PC-9 (cell line): ENCODE measurements at regions of chr17 and their contacts with region 1.

Region 1: DNA sequence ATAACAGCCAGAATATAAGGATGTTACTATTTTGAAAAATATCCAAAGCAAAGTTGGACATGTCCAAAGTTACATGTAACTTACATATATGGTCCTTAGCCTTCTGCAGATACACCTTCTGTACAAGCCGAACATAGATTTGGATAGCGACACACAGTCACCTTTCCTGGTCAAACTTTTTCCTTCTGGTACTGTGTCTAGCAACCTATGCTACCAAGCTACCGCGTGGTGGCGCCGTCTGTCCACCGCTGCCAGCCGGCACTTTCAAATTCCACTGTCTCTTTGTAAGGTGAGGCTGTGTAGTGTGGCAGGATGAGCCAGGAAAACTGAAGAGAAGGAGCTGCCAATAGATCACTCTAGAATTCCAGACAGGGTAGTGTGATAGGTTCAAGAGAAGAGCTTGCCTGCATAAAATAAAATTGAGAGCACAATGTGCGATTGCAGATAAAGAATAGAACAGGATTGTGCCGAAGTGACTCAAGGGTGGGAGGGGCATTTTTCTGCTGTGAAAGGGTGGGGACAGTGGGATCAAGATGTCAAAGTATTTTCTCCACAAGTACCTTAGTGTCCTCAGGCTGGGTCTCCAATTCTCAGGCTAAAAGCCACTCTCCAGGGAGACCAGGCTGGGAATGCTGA is 366.9 kb downstream of the SLC39A11 start:
- DNase-seq: peak in 1 of 2 experiments; percentile 69
- H3K4me3 ChIP-seq: no peak overlapping the region
- H3K27ac ChIP-seq: no peak overlapping the region
- H3K4me1 ChIP-seq: peaks cover 33% of the 10 kb centered on the region
- H3K27me3 ChIP-seq: no peaks in the 10 kb centered on the region
- CTCF ChIP-seq: peak; percentile 89

Region 2: GRCh38 chr17:72556944-72557826 is 168.4 kb before region 1 on chr17:
- CTCF ChIA-PET with region 1: interaction called, 36 read pairs
- POLR2A ChIA-PET with region 1: interaction called, 4 read pairs
- intact Hi-C with region 1: loop called (anchors 1 kb)
- DNase-seq: peak; percentile 47 to 61
- H3K4me3 ChIP-seq: no peak overlapping the region
- H3K27ac ChIP-seq: no peak overlapping the region
- H3K4me1 ChIP-seq: peaks cover 14% of the 10 kb centered on the region; the same call in 1 of the 2 replicates
- H3K27me3 ChIP-seq: no peaks in the 10 kb centered on the region
- CTCF ChIP-seq: peak; percentile 85

Region 3: GRCh38 chr17:73071066-73071999 is 345.8 kb after region 1 on chr17:
- CTCF ChIA-PET with region 1: interaction called, 15 read pairs
- POLR2A ChIA-PET with region 1: no interaction called
- intact Hi-C with region 1: no loop called
- DNase-seq: no peak
- H3K4me3 ChIP-seq: no peak overlapping the region
- H3K27ac ChIP-seq: no peak overlapping the region
- H3K4me1 ChIP-seq: peaks cover 25% of the 10 kb centered on the region
- H3K27me3 ChIP-seq: no peaks in the 10 kb centered on the region
- CTCF ChIP-seq: no peak

Region 4: GRCh38 chr17:73231841-73232586 is 506.5 kb after region 1 on chr17:
- CTCF ChIA-PET with region 1: no interaction called
- POLR2A ChIA-PET with region 1: no interaction called
- intact Hi-C with region 1: loop called (anchors 5 kb)
- DNase-seq: peak; percentile 81 to 95
- H3K4me3 ChIP-seq: peak overlapping the region; percentile 97
- H3K27ac ChIP-seq: peak overlapping the region; percentile 29
- H3K4me1 ChIP-seq: peaks cover 43% of the 10 kb centered on the region
- H3K27me3 ChIP-seq: no peaks in the 10 kb centered on the region
- CTCF ChIP-seq: peak; percentile 61

Region 5: GRCh38 chr17:73311781-73312641 is 586.5 kb after region 1 on chr17 and contains the start of gene CDC42EP4:
- CTCF ChIA-PET with region 1: interaction called, 17 read pairs
- POLR2A ChIA-PET with region 1: no interaction called
- intact Hi-C with region 1: loop called (anchors 5 kb)
- DNase-seq: peak; percentile 85 to 97
- H3K4me3 ChIP-seq: peak within 1 kb of the TSS; percentile 93
- H3K27ac ChIP-seq: peak within 1 kb of the TSS; percentile 84
- H3K4me1 ChIP-seq: peaks cover 33% of the 10 kb centered on the region
- H3K27me3 ChIP-seq: no peaks in the 10 kb centered on the region
- CTCF ChIP-seq: no peak
- total RNA-seq, gene CDC42EP4: 48.4 and 52.0 TPM in 2 replicates

Region 6: GRCh38 chr17:73429440-73430164 is 704.1 kb after region 1 on chr17:
- CTCF ChIA-PET with region 1: no interaction called
- POLR2A ChIA-PET with region 1: no interaction called
- intact Hi-C with region 1: loop called (anchors 5 kb)
- DNase-seq: peak; percentile 47 to 72
- H3K4me3 ChIP-seq: no peak overlapping the region
- H3K27ac ChIP-seq: no peak overlapping the region
- H3K4me1 ChIP-seq: no peaks in the 10 kb centered on the region
- H3K27me3 ChIP-seq: peaks cover 94% of the 10 kb centered on the region
- CTCF ChIP-seq: peak; percentile 98